ENCODE measurements at regions of chr10 and their contacts with region 1.

Region 1: GRCh38 chr10:5014936-5015335 is 11.3 kb upstream of the AKR1C2 start:
- DNase-seq: no peak
- H3K4me3 ChIP-seq: no peak overlapping the region
- H3K27ac ChIP-seq: no peak overlapping the region
- H3K4me1 ChIP-seq: peaks cover 6% of the 10 kb centered on the region
- H3K27me3 ChIP-seq: no peaks in the 10 kb centered on the region
- CTCF ChIP-seq: no peak
- POLR2A ChIP-seq: no peak

Region 2: DNA sequence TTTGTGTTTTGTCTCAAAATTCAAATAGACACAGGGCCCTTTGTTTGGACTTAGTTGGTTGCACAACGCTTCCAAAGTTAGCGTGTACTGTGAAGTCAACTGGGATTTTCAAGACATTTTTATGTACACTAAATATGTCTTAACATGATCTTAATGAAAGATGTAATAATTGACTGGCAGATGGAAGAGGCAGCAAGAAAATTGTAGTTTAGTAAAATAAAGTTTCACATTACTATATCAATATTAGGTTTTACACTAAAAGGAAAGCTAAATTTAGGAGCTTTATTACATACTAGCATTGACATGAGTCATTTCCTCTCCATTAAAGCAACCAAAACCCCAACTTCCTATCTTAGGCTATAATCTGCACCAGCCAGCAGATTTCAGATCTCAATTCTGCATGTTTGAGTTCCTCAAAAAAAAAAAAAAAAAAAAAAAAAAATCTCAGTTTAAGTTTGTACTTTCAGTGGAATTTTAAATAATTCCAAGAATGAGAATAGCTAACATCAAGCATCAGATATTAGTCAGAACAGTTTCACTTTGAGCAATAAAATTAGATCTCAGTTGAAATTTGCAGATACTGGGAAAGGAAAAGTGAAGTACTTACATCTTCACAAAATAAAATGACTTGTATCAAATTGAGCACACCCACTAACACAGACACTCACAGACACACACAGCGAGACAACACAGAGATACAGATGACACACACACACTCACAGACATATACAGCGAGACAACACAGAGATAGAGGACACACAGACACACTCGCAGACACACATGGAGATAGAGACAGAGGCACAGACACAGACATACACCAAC is 883.3 kb before region 1 on chr10:
- CTCF ChIA-PET with region 1: no interaction called
- POLR2A ChIA-PET with region 1: no interaction called
- dilution Hi-C with region 1: no loop called
- intact Hi-C with region 1: no loop called
- DNase-seq: peak; percentile 86
- H3K4me3 ChIP-seq: peak overlapping the region in 1 of 3 experiments; percentile 47
- H3K27ac ChIP-seq: peak overlapping the region; percentile 92
- H3K4me1 ChIP-seq: peaks cover 48% of the 10 kb centered on the region
- H3K27me3 ChIP-seq: no peaks in the 10 kb centered on the region
- CTCF ChIP-seq: no peak
- POLR2A ChIP-seq: no peak

Region 3: GRCh38 chr10:4947635-4948596 is 67.0 kb before region 1 on chr10:
- CTCF ChIA-PET with region 1: no interaction called
- POLR2A ChIA-PET with region 1: no interaction called
- dilution Hi-C with region 1: no loop called
- intact Hi-C with region 1: no loop called
- DNase-seq: peak; percentile 45
- H3K4me3 ChIP-seq: no peak overlapping the region
- H3K27ac ChIP-seq: no peak overlapping the region
- H3K4me1 ChIP-seq: peaks cover 3% of the 10 kb centered on the region
- H3K27me3 ChIP-seq: no peaks in the 10 kb centered on the region
- CTCF ChIP-seq: no peak
- POLR2A ChIP-seq: no peak

Region 4: DNA sequence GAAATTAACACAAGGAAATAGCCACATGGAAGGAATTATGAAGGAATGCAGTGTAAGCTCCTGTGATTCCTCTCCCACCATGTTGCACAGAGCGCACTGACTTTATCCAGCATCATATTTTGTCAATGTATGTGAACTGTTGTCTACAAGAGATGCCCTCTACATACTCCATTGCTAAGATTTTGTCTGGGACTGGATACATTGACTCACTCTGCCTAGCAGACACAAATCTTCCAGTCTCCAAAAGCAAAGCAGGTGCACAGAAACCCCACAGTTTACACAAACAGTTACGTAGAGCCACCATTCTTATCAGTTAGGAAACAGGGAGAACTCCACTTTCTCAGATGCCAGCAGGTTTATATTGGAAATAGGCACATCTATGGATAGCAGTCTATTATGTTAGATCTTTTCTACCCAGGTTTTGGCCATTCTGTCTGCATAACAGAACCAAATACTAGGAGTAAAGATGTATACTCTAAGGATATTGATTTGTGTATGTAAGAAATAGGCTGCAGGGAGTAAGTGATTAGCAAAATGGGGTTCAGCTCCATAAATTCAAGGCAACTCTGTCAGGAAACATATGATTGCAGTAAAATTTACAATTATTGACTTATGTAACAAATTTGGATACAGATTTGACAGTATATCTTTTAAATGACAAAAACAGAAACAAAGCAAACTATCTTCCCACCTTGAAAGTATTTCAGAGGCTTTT is 12.8 kb before region 1 on chr10:
- CTCF ChIA-PET with region 1: no interaction called
- POLR2A ChIA-PET with region 1: no interaction called
- dilution Hi-C with region 1: no loop called
- intact Hi-C with region 1: no loop called
- DNase-seq: no peak
- H3K4me3 ChIP-seq: no peak overlapping the region
- H3K27ac ChIP-seq: no peak overlapping the region
- H3K4me1 ChIP-seq: no peaks in the 10 kb centered on the region
- H3K27me3 ChIP-seq: peaks cover 2% of the 10 kb centered on the region in 2 experiments
- CTCF ChIP-seq: no peak
- POLR2A ChIP-seq: no peak

Region 5: DNA sequence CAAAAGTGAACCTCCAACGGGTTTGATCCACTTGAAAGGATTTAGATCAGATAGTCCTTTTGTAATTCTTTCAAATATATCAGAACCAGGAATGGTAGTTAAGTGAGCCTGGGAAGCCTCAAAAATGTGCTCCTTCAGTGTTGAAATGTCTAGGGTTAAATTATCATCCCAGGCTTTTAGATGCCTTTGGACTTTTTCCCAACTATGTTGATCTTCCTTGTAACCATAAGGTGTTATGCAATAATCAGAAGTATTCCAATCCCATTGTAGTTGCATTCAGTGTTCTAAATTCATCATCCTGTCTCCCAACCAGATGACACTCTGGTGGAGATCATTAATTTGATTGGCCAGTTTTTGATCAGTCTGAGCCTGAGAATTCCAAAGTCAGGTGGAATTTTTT is 23.8 kb after region 1 on chr10:
- CTCF ChIA-PET with region 1: no interaction called
- POLR2A ChIA-PET with region 1: no interaction called
- dilution Hi-C with region 1: no loop called
- intact Hi-C with region 1: no loop called
- DNase-seq: no peak
- H3K4me3 ChIP-seq: no peak overlapping the region
- H3K27ac ChIP-seq: no peak overlapping the region
- H3K4me1 ChIP-seq: no peaks in the 10 kb centered on the region
- H3K27me3 ChIP-seq: no peaks in the 10 kb centered on the region
- CTCF ChIP-seq: no peak
- POLR2A ChIP-seq: no peak

Region 6: GRCh38 chr10:5293691-5294550 is 279.0 kb after region 1 on chr10:
- CTCF ChIA-PET with region 1: no interaction called
- POLR2A ChIA-PET with region 1: no interaction called
- dilution Hi-C with region 1: no loop called
- intact Hi-C with region 1: loop called (anchors 5 kb)
- DNase-seq: peak; percentile 44
- H3K4me3 ChIP-seq: no peak overlapping the region
- H3K27ac ChIP-seq: peak overlapping the region; percentile 20
- H3K4me1 ChIP-seq: peaks cover 29% of the 10 kb centered on the region
- H3K27me3 ChIP-seq: no peaks in the 10 kb centered on the region
- CTCF ChIP-seq: peak; percentile 63 to 70
- POLR2A ChIP-seq: no peak